GM12878 (cell line): ENCODE measurements at regions of chr4 and their contacts with region 1.

Region 1: GRCh38 chr4:178789279-178789678 is 1347.0 kb upstream of the AGA start:
- DNase-seq: no peak
- ATAC-seq: 0 out of 3 replicates have a peak, but pooled peaks have one; percentile 21
- H3K4me3 ChIP-seq: no peak overlapping the region
- H3K27ac ChIP-seq: no peak overlapping the region
- H3K4me1 ChIP-seq: no peaks in the 10 kb centered on the region
- H3K27me3 ChIP-seq: no peaks in the 10 kb centered on the region
- CTCF ChIP-seq: no peak
- EP300 ChIP-seq: no peak
- POLR2A ChIP-seq: no peak
- RAD21 ChIP-seq: no peak

Region 2: DNA sequence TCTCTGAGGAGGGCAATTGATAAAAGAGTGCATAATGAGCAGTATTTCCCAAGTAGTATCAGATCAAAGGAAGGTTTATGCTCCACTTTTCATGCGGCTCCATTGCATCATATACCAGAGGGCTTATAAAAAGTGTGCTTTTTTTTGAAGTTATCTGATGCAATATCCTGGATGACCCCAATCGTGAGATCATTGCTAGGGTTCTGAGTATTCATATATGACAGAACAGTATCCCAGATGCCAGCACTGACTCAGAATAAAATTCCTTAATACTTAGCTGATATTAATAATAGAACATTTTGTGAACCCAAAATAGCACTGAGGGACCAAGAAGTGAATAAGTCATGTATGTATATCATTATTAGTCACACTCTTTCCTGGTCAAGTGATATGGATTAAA is 401.5 kb before region 1 on chr4:
- CTCF ChIA-PET with region 1: no interaction called
- POLR2A ChIA-PET with region 1: no interaction called
- RAD21 ChIA-PET with region 1: no interaction called
- SMC1A ChIA-PET with region 1: no interaction called
- in situ Hi-C with region 1: no loop called
- intact Hi-C with region 1: no loop called
- DNase-seq: no peak
- ATAC-seq: no peak
- H3K4me3 ChIP-seq: no peak overlapping the region
- H3K27ac ChIP-seq: no peak overlapping the region
- H3K4me1 ChIP-seq: no peaks in the 10 kb centered on the region
- H3K27me3 ChIP-seq: no peaks in the 10 kb centered on the region
- CTCF ChIP-seq: no peak
- EP300 ChIP-seq: no peak
- POLR2A ChIP-seq: no peak
- RAD21 ChIP-seq: no peak

Region 3: GRCh38 chr4:178917756-178918155 is 128.5 kb after region 1 on chr4:
- CTCF ChIA-PET with region 1: no interaction called
- POLR2A ChIA-PET with region 1: no interaction called
- RAD21 ChIA-PET with region 1: no interaction called
- SMC1A ChIA-PET with region 1: no interaction called
- in situ Hi-C with region 1: no loop called
- intact Hi-C with region 1: no loop called
- DNase-seq: no peak
- ATAC-seq: peak; percentile 52; the same call in 2 of the 3 replicates
- H3K4me3 ChIP-seq: no peak overlapping the region
- H3K27ac ChIP-seq: no peak overlapping the region
- H3K4me1 ChIP-seq: no peaks in the 10 kb centered on the region
- H3K27me3 ChIP-seq: no peaks in the 10 kb centered on the region
- CTCF ChIP-seq: no peak
- EP300 ChIP-seq: no peak
- POLR2A ChIP-seq: no peak
- RAD21 ChIP-seq: no peak

Region 4: DNA sequence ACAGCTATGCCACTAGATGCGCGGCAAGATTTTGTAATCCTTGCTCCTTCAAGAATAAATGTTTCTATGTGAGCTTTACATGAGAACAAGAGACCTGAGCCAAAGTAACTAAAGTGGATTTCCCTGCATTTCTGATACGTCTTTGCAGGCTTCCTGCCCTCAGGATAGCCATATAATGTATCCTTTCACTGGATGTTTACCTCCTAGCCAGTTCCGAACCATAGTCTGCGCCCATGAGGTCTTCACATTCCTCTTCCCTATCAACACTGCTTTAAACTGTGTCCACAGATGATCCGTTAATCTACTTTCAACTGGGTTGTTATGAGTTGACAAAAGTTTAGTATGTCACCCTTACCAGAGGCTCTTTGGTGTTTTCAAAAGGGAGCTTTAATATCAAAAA is 542.1 kb after region 1 on chr4:
- CTCF ChIA-PET with region 1: no interaction called
- POLR2A ChIA-PET with region 1: interaction called, 11 read pairs
- RAD21 ChIA-PET with region 1: no interaction called
- SMC1A ChIA-PET with region 1: no interaction called
- in situ Hi-C with region 1: no loop called
- intact Hi-C with region 1: no loop called
- DNase-seq: no peak
- ATAC-seq: no peak
- H3K4me3 ChIP-seq: no peak overlapping the region
- H3K27ac ChIP-seq: no peak overlapping the region
- H3K4me1 ChIP-seq: no peaks in the 10 kb centered on the region
- H3K27me3 ChIP-seq: no peaks in the 10 kb centered on the region
- CTCF ChIP-seq: no peak
- EP300 ChIP-seq: no peak
- POLR2A ChIP-seq: no peak
- RAD21 ChIP-seq: no peak